Mammary epithelial cell (primary cell): ENCODE measurements at regions of chr17 and their contacts with region 1.

Region 1: DNA sequence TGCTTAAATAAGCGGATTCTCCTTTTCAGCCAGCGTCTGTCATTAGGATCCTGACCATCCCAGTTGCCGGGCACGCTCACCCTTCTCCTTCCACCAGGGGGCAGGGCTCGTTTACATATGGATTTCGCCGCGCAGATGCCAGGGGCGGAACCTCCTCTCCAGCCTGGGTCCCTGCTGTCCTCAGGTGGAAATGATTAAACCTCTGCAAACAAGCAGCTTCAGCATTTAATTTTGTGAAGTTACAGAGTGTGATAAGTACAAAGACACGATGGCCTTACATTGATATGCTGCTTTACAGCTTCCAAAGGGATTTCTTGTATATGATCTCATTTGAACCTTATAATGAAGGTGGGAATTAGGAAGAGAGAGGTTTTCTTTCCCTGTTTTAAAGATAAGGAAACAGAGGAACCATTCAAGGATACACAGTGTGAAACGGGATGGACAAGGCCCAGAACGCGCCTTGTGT is 3.9 kb upstream of the KRT28 start:
- DNase-seq: peak; percentile 65
- H3K4me3 ChIP-seq: no peak overlapping the region
- H3K27ac ChIP-seq: no peak overlapping the region
- H3K4me1 ChIP-seq: peaks cover 4% of the 10 kb centered on the region
- H3K27me3 ChIP-seq: no peaks in the 10 kb centered on the region
- CTCF ChIP-seq: peak; percentile 89 to 93

Region 2: GRCh38 chr17:40714473-40714872 is 89.2 kb before region 1 on chr17:
- CTCF ChIA-PET with region 1: interaction called, 10 read pairs
- dilution Hi-C with region 1: no loop called
- in situ Hi-C with region 1: no loop called
- intact Hi-C with region 1: no loop called
- DNase-seq: no peak
- H3K4me3 ChIP-seq: no peak overlapping the region
- H3K27ac ChIP-seq: no peak overlapping the region
- H3K4me1 ChIP-seq: peaks cover 3% of the 10 kb centered on the region
- H3K27me3 ChIP-seq: no peaks in the 10 kb centered on the region
- CTCF ChIP-seq: no peak

Region 3: GRCh38 chr17:40854159-40854814 is 50.6 kb after region 1 on chr17:
- CTCF ChIA-PET with region 1: no interaction called
- dilution Hi-C with region 1: no loop called
- in situ Hi-C with region 1: no loop called
- intact Hi-C with region 1: loop called (anchors 1 kb)
- DNase-seq: peak; percentile 84
- H3K4me3 ChIP-seq: no peak overlapping the region
- H3K27ac ChIP-seq: no peak overlapping the region
- H3K4me1 ChIP-seq: peaks cover 20% of the 10 kb centered on the region
- H3K27me3 ChIP-seq: no peaks in the 10 kb centered on the region
- CTCF ChIP-seq: no peak

Region 4: DNA sequence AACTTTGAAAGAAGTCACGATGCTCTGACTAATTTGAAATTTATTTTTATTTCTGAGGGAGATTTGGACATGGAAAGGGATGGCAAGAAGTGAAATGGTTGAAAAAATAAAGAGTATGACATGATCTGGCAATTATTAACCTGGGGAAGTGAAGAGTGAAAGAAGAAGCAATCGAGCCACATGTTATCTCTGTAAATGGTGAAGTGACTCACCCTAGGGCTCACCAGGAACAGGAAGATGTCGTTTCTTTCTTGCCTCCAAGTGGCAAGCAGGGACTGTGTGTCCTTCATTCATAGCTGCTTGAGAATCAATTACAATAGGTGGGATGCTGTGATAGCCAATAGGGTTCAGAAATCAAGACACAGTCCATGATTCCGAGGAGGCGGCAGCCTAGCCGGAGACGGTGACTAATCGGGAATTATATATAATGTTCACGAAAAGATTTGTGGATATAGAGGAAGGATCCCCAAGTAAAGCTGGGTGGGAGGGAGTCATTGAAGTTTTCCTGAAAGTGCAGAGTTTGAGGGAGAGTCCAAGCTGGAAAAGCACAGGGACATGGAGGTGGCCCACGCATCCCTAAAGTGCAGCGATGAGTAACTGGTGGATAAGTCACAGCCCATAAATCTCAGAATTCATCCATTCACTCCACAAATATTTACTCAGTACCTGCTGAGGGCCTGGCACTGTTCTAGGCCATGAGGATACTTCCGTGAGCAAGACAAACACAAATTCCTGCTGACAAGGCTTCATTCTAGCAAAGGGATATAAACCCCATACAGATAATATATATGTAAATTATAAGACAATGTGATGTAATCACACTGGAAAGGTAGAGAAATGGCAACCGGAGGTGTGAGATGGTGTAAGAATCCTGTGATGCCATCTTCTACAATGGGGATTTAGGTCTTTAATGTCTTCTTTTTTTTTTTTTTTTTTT is 99.7 kb after region 1 on chr17:
- CTCF ChIA-PET with region 1: no interaction called
- dilution Hi-C with region 1: no loop called
- in situ Hi-C with region 1: loop called in 1 of 2 experiments (anchors 5 kb)
- intact Hi-C with region 1: loop called (anchors 1 kb)
- DNase-seq: peak; percentile 84
- H3K4me3 ChIP-seq: no peak overlapping the region
- H3K27ac ChIP-seq: peak overlapping the region; percentile 92
- H3K4me1 ChIP-seq: peaks cover 25% of the 10 kb centered on the region
- H3K27me3 ChIP-seq: no peaks in the 10 kb centered on the region
- CTCF ChIP-seq: no peak

Region 5: DNA sequence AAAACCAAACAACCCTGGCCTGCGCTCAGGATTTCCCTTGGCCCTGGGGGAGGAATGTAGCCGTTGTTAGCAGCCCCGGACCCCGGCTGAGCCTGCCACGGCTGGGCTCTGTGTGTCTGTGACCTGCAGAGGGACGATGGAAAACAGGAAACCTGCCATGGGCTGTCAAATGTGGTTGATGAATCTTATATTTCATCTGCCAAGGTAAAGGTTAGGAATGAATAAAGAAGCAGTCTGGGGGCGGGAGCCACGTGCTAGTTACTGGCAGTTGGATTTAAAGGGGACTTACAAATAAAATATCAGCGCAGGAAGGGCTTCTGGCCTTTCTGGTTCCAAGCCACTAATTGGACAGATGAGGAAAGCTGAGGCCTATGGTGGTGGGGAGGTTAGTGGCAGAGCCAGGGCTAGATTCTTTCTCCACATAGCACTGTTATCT is 133.8 kb after region 1 on chr17 and contains the start of gene KRT23:
- CTCF ChIA-PET with region 1: no interaction called
- dilution Hi-C with region 1: no loop called
- in situ Hi-C with region 1: no loop called
- intact Hi-C with region 1: no loop called
- DNase-seq: peak; percentile 53
- H3K4me3 ChIP-seq: no peak within 1 kb of the TSS
- H3K27ac ChIP-seq: peak within 1 kb of the TSS; percentile 54
- H3K4me1 ChIP-seq: peaks cover 19% of the 10 kb centered on the region
- H3K27me3 ChIP-seq: no peaks in the 10 kb centered on the region
- CTCF ChIP-seq: no peak
- total RNA-seq, gene KRT23: 1.5 to 94.5 TPM

Region 6: GRCh38 chr17:41329281-41329948 is 525.8 kb after region 1 on chr17:
- CTCF ChIA-PET with region 1: no interaction called
- dilution Hi-C with region 1: no loop called
- in situ Hi-C with region 1: no loop called
- intact Hi-C with region 1: loop called (anchors 1 kb)
- DNase-seq: peak; percentile 52
- H3K4me3 ChIP-seq: no peak overlapping the region
- H3K27ac ChIP-seq: no peak overlapping the region
- H3K4me1 ChIP-seq: peaks cover under 1% of the 10 kb centered on the region
- H3K27me3 ChIP-seq: no peaks in the 10 kb centered on the region
- CTCF ChIP-seq: peak; percentile 88 to 96

Region 7: GRCh38 chr17:41403798-41404671 is 600.4 kb after region 1 on chr17:
- CTCF ChIA-PET with region 1: no interaction called
- dilution Hi-C with region 1: no loop called
- in situ Hi-C with region 1: no loop called
- intact Hi-C with region 1: loop called (anchors 5 kb)
- DNase-seq: peak; percentile 100
- H3K4me3 ChIP-seq: no peak overlapping the region
- H3K27ac ChIP-seq: peak overlapping the region; percentile 94
- H3K4me1 ChIP-seq: peaks cover 32% of the 10 kb centered on the region
- H3K27me3 ChIP-seq: no peaks in the 10 kb centered on the region
- CTCF ChIP-seq: no peak